Naive thymus-derived CD8-positive, alpha-beta T cell (primary cell): ENCODE measurements at regions of chr3 and their contacts with region 1.

Region 1: DNA sequence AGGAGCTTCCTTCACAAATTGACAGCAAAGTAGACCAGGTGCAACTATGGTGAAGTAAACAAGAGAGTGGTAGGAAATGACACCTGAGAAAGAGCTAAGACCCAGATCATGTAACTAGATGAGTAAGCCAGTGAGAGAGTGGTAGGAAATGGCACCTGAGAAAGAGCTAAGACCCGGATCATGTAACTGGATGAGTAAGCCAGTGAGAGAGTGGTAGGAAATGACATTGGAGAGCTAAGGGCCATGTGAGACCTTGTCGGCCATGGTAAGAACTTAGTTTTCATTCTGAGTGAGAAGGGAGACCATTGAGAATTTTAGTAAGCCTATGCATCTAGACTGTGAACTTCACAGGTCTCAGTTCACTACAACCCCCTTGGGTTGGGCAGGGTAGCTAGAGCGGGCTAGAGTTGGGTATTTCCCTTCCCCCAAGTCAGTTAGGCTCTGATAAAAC is 5.4 kb upstream of the SENP7 start:
- DNase-seq: peak in 7 of 10 donors; percentile 14 to 66 (median 35)
- ATAC-seq: peak; percentile 71 to 88
- H3K4me3 Mint-ChIP-seq: peak overlapping the region in 9 of 10 donors; percentile 1 to 65 (median 49)
- H3K27ac Mint-ChIP-seq: peak overlapping the region; percentile 38 to 94 (median 88)
- H3K4me1 Mint-ChIP-seq: peaks cover 21 to 54% (median 50%) of the 10 kb centered on the region in 4 donors
- H3K27me3 Mint-ChIP-seq: peaks cover 0 to under 1% (median 0%) of the 10 kb centered on the region in 5 donors

Region 2: DNA sequence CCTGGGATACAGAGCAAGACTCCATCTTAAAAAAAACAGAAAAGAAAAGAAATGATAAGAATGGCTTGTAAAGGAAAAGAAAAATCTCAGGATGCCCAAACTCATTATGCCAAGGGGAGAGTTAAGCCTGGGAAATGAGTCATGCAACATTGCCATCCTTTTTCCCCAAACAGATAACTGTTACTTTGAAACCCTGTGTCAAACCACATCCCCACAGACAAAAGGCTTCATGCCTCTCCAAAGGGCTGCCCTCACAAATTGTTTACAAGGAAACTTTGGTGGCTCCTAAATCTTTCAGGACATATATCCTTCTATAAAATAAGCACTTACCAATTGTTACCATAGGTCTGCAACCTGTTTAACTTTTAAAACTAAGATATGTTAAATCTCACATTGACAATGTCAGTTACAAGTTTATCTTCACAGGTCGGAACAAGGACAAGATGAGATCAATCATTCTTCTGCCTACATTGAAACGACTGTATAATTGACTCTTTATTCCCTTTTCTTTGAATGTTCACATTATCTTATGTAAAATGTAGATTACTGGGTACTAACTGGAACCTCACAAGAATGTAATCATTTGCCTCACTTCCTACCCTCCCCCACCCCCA is 13.1 kb after region 1 on chr3:
- POLR2A ChIA-PET with region 1: interaction called, 17 read pairs
- DNase-seq: peak in 1 of 10 donors; percentile 23
- ATAC-seq: peak; percentile 39 to 76
- H3K4me3 Mint-ChIP-seq: peak overlapping the region in 9 of 10 donors; percentile 1 to 64 (median 49)
- H3K27ac Mint-ChIP-seq: peak overlapping the region; percentile 14 to 93 (median 84)
- H3K4me1 Mint-ChIP-seq: peaks cover 26 to 42% (median 34%) of the 10 kb centered on the region in 4 donors
- H3K27me3 Mint-ChIP-seq: no peaks in the 10 kb centered on the region

Region 3: DNA sequence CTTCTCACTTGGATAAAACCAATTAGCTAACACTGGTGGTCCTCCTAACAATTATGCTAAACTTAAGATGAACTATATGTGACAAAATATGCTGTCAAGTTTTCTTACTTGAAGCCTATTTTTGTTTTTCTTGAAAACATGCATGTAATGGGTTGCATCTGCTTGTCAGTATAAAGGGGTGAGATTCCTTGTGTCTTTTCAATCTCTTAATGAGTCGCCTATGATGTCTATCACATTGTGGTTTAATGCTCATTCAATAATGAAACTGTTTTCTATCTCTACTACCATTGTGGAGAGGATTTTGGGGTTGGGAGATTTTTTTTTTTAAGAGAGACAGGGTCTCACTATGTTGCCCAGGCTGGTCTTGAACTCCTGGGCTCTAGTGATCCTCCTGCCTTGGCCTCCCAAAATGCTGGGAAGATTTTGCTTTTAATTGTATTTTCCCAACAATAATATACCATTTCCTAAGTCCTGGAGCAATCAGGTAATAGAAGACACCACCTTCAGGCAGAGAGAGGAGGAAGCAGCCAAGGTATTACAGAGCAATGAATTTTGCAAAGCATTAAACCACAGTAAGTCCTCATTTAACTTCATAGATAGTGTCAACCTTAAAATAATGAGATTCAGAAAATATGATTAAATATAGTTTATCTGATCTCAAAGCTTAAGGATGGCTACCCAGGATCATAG is 25.9 kb after region 1 on chr3:
- POLR2A ChIA-PET with region 1: interaction called, 12 read pairs
- DNase-seq: no peak
- ATAC-seq: peak in 1 of 2 donors; percentile 44
- H3K4me3 Mint-ChIP-seq: peak overlapping the region in 6 of 10 donors; percentile 20 to 37 (median 28)
- H3K27ac Mint-ChIP-seq: peak overlapping the region in 9 of 10 donors; percentile 63 to 90 (median 81)
- H3K4me1 Mint-ChIP-seq: peaks cover 14 to 33% (median 29%) of the 10 kb centered on the region in 4 donors
- H3K27me3 Mint-ChIP-seq: no peaks in the 10 kb centered on the region

Region 4: DNA sequence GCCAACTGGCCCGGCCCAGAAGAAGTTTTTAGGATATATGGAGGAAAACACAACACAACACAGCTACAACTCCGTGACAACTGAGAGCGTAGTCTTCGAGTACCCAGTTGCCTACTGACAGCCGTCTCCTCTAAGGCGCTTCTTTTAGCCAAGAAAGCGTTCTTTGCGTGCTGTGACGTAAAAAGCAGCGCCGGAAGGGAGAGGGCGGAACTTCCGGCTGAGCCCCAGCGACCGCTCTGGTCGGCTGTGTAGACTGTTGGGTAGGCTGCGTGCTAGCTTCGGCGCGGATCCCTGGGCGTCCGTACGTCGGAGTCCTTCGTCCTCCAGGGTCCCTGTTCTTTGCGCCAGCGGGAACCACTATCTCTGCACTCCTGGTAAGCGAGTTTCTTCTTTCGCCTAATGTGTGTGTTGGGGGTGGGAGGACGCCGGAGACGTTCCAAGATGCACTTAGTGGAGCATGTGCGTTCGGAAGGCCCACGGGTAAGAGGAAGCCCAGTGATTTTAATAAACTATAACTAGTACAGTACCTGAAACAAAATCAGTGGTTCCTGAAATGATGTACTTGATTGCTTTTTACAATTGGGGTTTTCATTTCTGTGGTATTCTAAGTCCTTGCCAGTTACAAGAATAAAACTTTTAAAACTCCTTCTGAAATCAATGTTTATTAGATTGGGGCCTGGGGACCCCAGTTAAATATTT is 43.3 kb after region 1 on chr3 and contains the start of gene TRMT10C:
- POLR2A ChIA-PET with region 1: interaction called, 15 read pairs
- DNase-seq: peak; percentile 81 to 95 (median 92)
- ATAC-seq: peak; percentile 95 to 96
- H3K4me3 Mint-ChIP-seq: peak within 1 kb of the TSS; percentile 92 to 100 (median 98)
- H3K27ac Mint-ChIP-seq: peak within 1 kb of the TSS; percentile 95 to 99 (median 98)
- H3K4me1 Mint-ChIP-seq: peaks cover 21 to 39% (median 30%) of the 10 kb centered on the region in 4 donors
- H3K27me3 Mint-ChIP-seq: peaks cover 0 to 5% (median under 1%) of the 10 kb centered on the region in 5 donors
- polyA plus RNA-seq, gene TRMT10C: 34.1 to 52.7 (median 36.7) TPM